ENCODE measurements at regions of chr3 and their contacts with region 1.

Region 1: GRCh38 chr3:172580680-172581401 is 57.6 kb upstream of the TNFSF10 start:
- DNase-seq: peak in 2 of 9 experiments; percentile 7 to 22
- ATAC-seq: no peak
- H3K4me3 ChIP-seq: no peak overlapping the region
- H3K4me3 Mint-ChIP-seq: peak overlapping the region; percentile 32
- H3K27ac ChIP-seq: peak overlapping the region in 1 of 2 experiments; percentile 47
- H3K27ac Mint-ChIP-seq: peak overlapping the region; percentile 75
- H3K4me1 ChIP-seq: peaks cover 29% of the 10 kb centered on the region
- H3K4me1 Mint-ChIP-seq: peaks cover 52% of the 10 kb centered on the region
- H3K27me3 ChIP-seq: no peaks in the 10 kb centered on the region
- H3K27me3 Mint-ChIP-seq: no peaks in the 10 kb centered on the region
- CTCF ChIP-seq: no peak

Region 2: DNA sequence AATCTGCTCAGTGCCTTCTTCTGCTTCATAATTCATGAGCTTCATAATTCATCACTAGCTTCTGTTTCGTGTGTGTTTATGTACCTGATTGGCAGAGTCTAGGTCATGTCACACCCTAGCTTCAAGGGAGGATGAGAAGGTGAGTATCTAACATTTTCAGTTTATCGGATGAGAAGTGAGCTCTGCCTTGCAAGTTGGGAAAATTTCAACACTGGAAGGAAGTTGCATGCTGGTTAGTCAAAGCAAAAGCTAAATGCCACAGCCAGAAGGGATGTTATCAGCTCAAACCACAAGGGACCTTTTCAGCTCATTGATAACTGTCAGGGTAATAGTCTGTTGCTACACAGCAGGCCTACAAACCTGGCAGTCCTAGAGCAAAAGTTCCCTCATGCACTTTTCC is 50.3 kb before region 1 on chr3:
- CTCF ChIA-PET with region 1: no interaction called
- POLR2A ChIA-PET with region 1: no interaction called
- intact Hi-C with region 1: loop called (anchors 5 kb)
- DNase-seq: peak in 1 of 9 experiments; percentile 36
- ATAC-seq: peak; percentile 29
- H3K4me3 ChIP-seq: no peak overlapping the region
- H3K4me3 Mint-ChIP-seq: no peak overlapping the region
- H3K27ac ChIP-seq: no peak overlapping the region
- H3K27ac Mint-ChIP-seq: peak overlapping the region; percentile 74
- H3K4me1 ChIP-seq: peaks cover 10% of the 10 kb centered on the region
- H3K4me1 Mint-ChIP-seq: peaks cover 11% of the 10 kb centered on the region
- H3K27me3 ChIP-seq: no peaks in the 10 kb centered on the region
- H3K27me3 Mint-ChIP-seq: no peaks in the 10 kb centered on the region
- CTCF ChIP-seq: no peak

Region 3: DNA sequence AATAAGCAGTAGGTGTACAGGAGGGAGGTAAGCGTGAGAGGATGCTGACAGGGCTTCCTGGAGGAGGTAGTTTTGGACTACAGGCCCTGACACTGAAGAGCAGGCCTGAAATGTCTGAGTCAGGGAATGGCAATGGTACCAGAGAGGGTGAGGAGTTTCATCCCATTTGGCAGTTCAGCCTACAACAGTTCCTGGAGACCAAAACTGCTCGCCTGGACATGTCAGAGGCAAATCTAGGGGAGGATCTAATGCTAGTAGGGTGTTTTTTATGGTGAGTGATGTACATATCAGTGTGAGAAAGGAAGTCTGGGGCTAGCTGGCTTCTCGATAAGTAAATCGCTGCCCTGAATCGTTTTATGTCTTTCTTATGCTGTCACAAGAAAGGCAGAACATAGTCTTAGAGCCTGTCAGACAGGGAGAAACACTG is 43.8 kb before region 1 on chr3:
- CTCF ChIA-PET with region 1: no interaction called
- POLR2A ChIA-PET with region 1: no interaction called
- intact Hi-C with region 1: loop called (anchors 5 kb)
- DNase-seq: no peak
- ATAC-seq: no peak
- H3K4me3 ChIP-seq: no peak overlapping the region
- H3K4me3 Mint-ChIP-seq: no peak overlapping the region
- H3K27ac ChIP-seq: no peak overlapping the region
- H3K27ac Mint-ChIP-seq: peak overlapping the region; percentile 1
- H3K4me1 ChIP-seq: peaks cover 20% of the 10 kb centered on the region
- H3K4me1 Mint-ChIP-seq: peaks cover 20% of the 10 kb centered on the region
- H3K27me3 ChIP-seq: no peaks in the 10 kb centered on the region
- H3K27me3 Mint-ChIP-seq: no peaks in the 10 kb centered on the region
- CTCF ChIP-seq: no peak